Body of pancreas (tissue), 4 donors: ENCODE measurements at regions of chr5 and their contacts with region 1.

Region 1: GRCh38 chr5:131165119-131165727 is at the start of gene HINT1:
- DNase-seq: peak; percentile 92 to 95 (median 93)
- ATAC-seq: peak; percentile 93
- H3K4me3 ChIP-seq: peak within 1 kb of the TSS; percentile 33 to 84
- H3K27ac ChIP-seq: peak within 1 kb of the TSS; percentile 67 to 92 (median 89)
- H3K4me1 ChIP-seq: peaks cover 17% of the 10 kb centered on the region
- H3K27me3 ChIP-seq: no peaks in the 10 kb centered on the region
- CTCF ChIP-seq: peak in 3 of 7 experiments; percentile 11 to 29 (median 29)
- POLR2A ChIP-seq: peak; percentile 54 to 82 (median 81)
- total RNA-seq, gene HINT1: 89.8 to 109 TPM

Region 2: DNA sequence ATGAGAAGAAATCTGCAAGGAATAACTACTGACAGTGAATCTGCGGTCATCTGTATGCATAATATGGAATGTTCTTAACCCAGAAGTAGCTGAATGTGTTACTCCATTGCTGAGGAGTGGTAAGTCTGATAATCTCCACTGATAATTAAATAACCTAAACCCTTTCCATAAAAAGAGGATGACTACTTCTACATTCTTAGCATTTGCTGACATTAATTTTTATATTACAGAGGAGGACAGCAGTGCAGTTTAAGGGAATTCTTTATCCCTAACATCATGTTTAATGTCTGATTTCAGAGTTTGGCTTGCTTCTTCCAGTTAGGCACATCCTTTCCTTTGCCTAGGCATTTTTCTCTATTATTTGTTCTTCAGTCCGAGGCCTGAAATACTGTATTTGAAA is 150.8 kb after region 1 on chr5:
- intact Hi-C with region 1: no loop called
- DNase-seq: no peak
- ATAC-seq: no peak
- H3K4me3 ChIP-seq: no peak overlapping the region
- H3K27ac ChIP-seq: no peak overlapping the region
- H3K4me1 ChIP-seq: peaks cover 21% of the 10 kb centered on the region
- H3K27me3 ChIP-seq: no peaks in the 10 kb centered on the region
- CTCF ChIP-seq: no peak
- POLR2A ChIP-seq: no peak

Region 3: GRCh38 chr5:131406975-131407638 is 241.9 kb after region 1 on chr5:
- intact Hi-C with region 1: loop called (anchors 10 kb)
- DNase-seq: peak; percentile 20 to 60 (median 34)
- ATAC-seq: peak; percentile 68
- H3K4me3 ChIP-seq: no peak overlapping the region
- H3K27ac ChIP-seq: no peak overlapping the region
- H3K4me1 ChIP-seq: no peaks in the 10 kb centered on the region
- H3K27me3 ChIP-seq: no peaks in the 10 kb centered on the region
- CTCF ChIP-seq: no peak
- POLR2A ChIP-seq: no peak